Thyroid gland (tissue), 4 donors: ENCODE measurements at regions of chr10 and their contacts with region 1.

Region 1: GRCh38 chr10:72331601-72332422 is 22.9 kb downstream of the DNAJB12 start:
- DNase-seq: peak; percentile 96 to 97
- H3K4me3 ChIP-seq: no peak overlapping the region
- H3K27ac ChIP-seq: peak overlapping the region; percentile 82 to 98 (median 97)
- H3K4me1 ChIP-seq: peaks cover 59 to 87% of the 10 kb centered on the region in 2 donors
- H3K27me3 ChIP-seq: no peaks in the 10 kb centered on the region
- CTCF ChIP-seq: peak in 5 of 6 experiments; percentile 28 to 72 (median 53)
- POLR2A ChIP-seq: peak in 1 of 2 donors; percentile 63

Region 2: DNA sequence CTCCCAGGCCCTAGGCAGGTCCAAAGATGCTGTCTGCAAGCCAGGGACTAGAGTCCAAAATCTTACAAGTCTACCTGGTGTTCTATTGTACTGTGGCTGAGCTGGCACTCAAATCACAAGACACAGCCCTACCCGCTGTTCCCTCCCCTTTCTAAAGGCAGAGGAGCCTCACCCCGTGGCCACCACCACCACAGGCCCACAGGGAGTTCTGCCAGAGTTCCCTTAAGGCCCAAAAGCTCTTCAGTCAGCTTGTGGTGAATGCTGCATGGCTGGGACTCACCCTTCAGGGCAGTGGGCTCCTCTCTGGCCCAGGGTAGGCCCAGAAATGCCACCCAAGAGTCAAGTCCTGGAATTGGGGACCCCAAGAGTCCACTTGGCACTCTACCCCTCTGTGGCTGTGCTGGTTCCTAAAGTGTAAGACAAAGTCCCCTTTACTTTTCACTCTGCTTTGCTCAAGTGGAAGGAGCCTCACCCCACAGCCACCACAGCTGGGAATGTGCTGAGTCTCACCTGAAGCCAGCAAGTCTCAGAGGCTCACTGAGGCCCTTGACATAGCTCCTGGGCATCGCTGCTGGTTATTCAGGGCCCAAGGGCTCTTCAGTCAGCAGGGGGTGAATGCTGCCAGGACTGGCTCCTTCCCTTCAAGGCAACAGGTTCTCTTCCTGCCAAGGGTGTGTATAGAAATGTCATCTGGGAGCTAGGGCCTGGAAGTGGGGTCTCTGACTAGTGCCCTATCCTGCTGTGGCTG is 432.0 kb before region 1 on chr10:
- intact Hi-C with region 1: loop called (anchors 5 kb)
- DNase-seq: peak; percentile 96
- H3K4me3 ChIP-seq: no peak overlapping the region
- H3K27ac ChIP-seq: peak overlapping the region; percentile 86 to 98 (median 94)
- H3K4me1 ChIP-seq: peaks cover 9 to 20% of the 10 kb centered on the region in 2 donors
- H3K27me3 ChIP-seq: no peaks in the 10 kb centered on the region
- CTCF ChIP-seq: no peak
- POLR2A ChIP-seq: peak in 1 of 2 donors; percentile 9

Region 3: DNA sequence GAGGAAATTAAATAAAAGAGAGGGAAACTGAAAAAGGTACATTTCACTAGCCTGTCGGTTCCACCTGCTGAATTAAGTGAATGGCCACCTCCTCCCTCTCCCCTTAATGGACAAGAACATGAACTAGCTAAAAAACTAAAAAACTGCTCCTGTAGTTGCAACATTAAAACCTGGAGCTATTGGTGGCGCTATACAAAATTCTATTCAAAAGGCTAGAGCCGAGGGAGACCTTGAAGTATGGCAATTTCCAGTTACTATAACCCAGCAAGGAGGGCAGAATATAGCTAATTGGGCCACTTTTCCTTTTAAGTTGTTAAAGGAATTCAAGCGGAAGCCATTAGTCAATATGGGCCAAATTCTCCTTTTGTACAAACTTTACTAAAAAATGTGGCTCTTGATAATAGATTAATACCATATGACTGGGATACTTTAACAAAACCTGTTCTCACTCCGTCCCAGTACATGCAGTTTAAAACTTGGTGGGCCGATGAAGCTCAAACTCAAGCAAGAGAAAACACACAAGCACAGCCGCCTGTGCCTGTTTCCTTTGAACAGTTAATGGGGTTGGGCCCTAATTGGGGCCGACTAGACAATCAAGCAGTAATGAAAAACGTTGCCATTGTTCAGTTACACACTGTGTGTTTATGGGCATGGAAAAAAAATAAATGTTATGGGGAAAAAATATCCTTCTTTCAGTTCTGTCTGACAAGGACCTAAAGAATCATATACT is 374.1 kb before region 1 on chr10:
- intact Hi-C with region 1: loop called (anchors 10 kb)
- DNase-seq: no peak
- H3K4me3 ChIP-seq: no peak overlapping the region
- H3K27ac ChIP-seq: no peak overlapping the region
- H3K4me1 ChIP-seq: peaks cover 0 to 6% of the 10 kb centered on the region in 2 donors
- H3K27me3 ChIP-seq: no peaks in the 10 kb centered on the region
- CTCF ChIP-seq: no peak
- POLR2A ChIP-seq: no peak

Region 4: GRCh38 chr10:72048450-72049124 is 283.2 kb before region 1 on chr10:
- intact Hi-C with region 1: loop called (anchors 5 kb)
- DNase-seq: peak; percentile 93 to 94
- H3K4me3 ChIP-seq: no peak overlapping the region
- H3K27ac ChIP-seq: no peak overlapping the region
- H3K4me1 ChIP-seq: peaks cover 0 to 10% of the 10 kb centered on the region in 2 donors
- H3K27me3 ChIP-seq: no peaks in the 10 kb centered on the region
- CTCF ChIP-seq: peak; percentile 95 to 100 (median 99)
- POLR2A ChIP-seq: no peak

Region 5: DNA sequence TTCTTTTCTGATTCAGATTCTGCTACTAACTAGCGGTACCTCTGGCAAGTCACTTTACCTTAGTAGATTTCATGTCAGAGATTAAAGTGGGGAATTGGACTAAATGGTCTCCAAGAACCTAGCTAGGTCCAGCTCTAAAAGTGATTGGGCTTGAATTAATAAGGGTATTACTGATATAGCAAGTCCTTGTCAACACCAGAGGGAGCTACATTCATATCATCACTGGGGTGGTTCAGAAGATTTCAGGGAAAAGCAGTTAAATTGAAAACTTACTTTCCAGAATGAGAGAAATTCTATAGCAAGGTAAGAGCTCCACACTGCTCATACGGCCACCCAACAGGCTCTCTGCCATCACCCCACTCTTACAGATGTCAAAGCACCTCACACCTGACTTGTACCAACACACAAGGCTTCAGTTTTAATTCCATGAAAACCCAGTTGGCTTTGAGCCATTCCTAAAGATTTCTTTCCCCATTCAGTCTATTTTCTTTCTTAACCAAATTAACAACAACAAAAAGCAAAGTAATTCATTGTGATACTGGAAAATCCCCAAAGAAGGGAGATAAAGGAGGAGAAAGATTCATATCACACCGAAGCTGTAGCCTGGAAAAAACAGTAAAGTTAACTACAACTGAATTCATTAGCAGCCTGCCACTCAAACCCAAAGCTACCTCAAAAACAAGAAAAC is 205.5 kb before region 1 on chr10:
- intact Hi-C with region 1: loop called (anchors 5 kb)
- DNase-seq: no peak
- H3K4me3 ChIP-seq: no peak overlapping the region
- H3K27ac ChIP-seq: peak overlapping the region in 1 of 3 donors; percentile 14
- H3K4me1 ChIP-seq: peaks cover 12 to 13% of the 10 kb centered on the region in 2 donors
- H3K27me3 ChIP-seq: no peaks in the 10 kb centered on the region
- CTCF ChIP-seq: peak in 5 of 6 experiments; percentile 11 to 67 (median 46)
- POLR2A ChIP-seq: no peak

Region 6: GRCh38 chr10:72260588-72261322 is 71.1 kb before region 1 on chr10:
- intact Hi-C with region 1: loop called (anchors 5 kb)
- DNase-seq: peak; percentile 85
- H3K4me3 ChIP-seq: peak overlapping the region; percentile 19 to 34 (median 22)
- H3K27ac ChIP-seq: peak overlapping the region; percentile 78 to 95 (median 85)
- H3K4me1 ChIP-seq: peaks cover 52 to 75% of the 10 kb centered on the region in 2 donors
- H3K27me3 ChIP-seq: no peaks in the 10 kb centered on the region
- CTCF ChIP-seq: no peak
- POLR2A ChIP-seq: peak in 1 of 2 donors; percentile 49

Region 7: DNA sequence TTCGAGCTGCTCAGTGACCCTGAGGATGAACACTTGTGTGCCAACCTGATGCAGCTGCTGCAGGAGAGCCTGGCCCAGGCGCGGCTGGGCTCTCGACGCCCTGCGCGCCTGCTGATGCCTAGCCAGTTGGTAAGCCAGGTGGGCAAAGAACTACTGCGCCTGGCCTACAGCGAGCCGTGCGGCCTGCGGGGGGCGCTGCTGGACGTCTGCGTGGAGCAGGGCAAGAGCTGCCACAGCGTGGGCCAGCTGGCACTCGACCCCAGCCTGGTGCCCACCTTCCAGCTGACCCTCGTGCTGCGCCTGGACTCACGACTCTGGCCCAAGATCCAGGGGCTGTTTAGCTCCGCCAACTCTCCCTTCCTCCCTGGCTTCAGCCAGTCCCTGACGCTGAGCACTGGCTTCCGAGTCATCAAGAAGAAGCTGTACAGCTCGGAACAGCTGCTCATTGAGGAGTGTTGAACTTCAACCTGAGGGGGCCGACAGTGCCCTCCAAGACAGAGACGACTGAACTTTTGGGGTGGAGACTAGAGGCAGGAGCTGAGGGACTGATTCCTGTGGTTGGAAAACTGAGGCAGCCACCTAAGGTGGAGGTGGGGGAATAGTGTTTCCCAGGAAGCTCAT is 57.0 kb before region 1 on chr10:
- intact Hi-C with region 1: loop called (anchors 5 kb)
- DNase-seq: peak; percentile 79 to 84
- H3K4me3 ChIP-seq: peak overlapping the region; percentile 71 to 91 (median 79)
- H3K27ac ChIP-seq: peak overlapping the region; percentile 98 to 99 (median 98)
- H3K4me1 ChIP-seq: peaks cover 32 to 43% of the 10 kb centered on the region in 2 donors
- H3K27me3 ChIP-seq: no peaks in the 10 kb centered on the region
- CTCF ChIP-seq: peak in 5 of 6 experiments; percentile 54 to 68 (median 66)
- POLR2A ChIP-seq: peak in 1 of 2 donors; percentile 60

Region 8: DNA sequence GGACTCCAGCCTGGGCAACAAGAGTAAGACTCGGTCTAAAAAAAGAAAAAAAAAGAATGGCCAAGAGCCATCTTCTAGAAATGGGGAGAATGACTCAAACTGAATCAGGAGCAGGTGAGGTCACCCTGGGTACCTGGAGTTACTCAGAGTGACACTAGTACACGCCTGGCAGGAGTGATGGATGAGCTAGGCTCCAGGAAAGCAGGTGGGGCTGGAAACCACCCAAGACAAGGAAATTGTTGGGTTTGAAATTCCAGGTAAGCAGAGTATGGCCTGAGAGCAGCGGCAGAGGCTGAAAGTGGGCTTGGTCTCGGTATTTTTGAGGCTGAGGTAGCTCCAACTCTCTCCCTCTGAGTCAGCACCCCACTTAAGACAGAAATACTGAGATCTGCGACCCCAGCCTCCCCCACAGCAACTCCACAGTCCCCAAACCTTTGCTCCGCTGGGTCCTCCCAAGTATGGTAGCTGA is 39.6 kb before region 1 on chr10:
- intact Hi-C with region 1: no loop called
- DNase-seq: peak; percentile 66
- H3K4me3 ChIP-seq: no peak overlapping the region
- H3K27ac ChIP-seq: peak overlapping the region in 1 of 3 donors; percentile 26
- H3K4me1 ChIP-seq: peaks cover 4 to 10% of the 10 kb centered on the region in 2 donors
- H3K27me3 ChIP-seq: no peaks in the 10 kb centered on the region
- CTCF ChIP-seq: no peak
- POLR2A ChIP-seq: no peak

Region 9: GRCh38 chr10:72490951-72491350 is 159.1 kb after region 1 on chr10:
- intact Hi-C with region 1: no loop called
- DNase-seq: no peak
- H3K4me3 ChIP-seq: no peak overlapping the region
- H3K27ac ChIP-seq: no peak overlapping the region
- H3K4me1 ChIP-seq: no peaks in the 10 kb centered on the region
- H3K27me3 ChIP-seq: no peaks in the 10 kb centered on the region
- CTCF ChIP-seq: no peak
- POLR2A ChIP-seq: no peak

Region 10: GRCh38 chr10:73296946-73297345 is 965.1 kb after region 1 on chr10:
- intact Hi-C with region 1: no loop called
- DNase-seq: no peak
- H3K4me3 ChIP-seq: no peak overlapping the region
- H3K27ac ChIP-seq: no peak overlapping the region
- H3K4me1 ChIP-seq: no peaks in the 10 kb centered on the region
- H3K27me3 ChIP-seq: no peaks in the 10 kb centered on the region
- CTCF ChIP-seq: no peak
- POLR2A ChIP-seq: no peak